Endothelial cell of umbilical vein (primary cell): ENCODE measurements at regions of chr10 and their contacts with region 1.

Region 1: DNA sequence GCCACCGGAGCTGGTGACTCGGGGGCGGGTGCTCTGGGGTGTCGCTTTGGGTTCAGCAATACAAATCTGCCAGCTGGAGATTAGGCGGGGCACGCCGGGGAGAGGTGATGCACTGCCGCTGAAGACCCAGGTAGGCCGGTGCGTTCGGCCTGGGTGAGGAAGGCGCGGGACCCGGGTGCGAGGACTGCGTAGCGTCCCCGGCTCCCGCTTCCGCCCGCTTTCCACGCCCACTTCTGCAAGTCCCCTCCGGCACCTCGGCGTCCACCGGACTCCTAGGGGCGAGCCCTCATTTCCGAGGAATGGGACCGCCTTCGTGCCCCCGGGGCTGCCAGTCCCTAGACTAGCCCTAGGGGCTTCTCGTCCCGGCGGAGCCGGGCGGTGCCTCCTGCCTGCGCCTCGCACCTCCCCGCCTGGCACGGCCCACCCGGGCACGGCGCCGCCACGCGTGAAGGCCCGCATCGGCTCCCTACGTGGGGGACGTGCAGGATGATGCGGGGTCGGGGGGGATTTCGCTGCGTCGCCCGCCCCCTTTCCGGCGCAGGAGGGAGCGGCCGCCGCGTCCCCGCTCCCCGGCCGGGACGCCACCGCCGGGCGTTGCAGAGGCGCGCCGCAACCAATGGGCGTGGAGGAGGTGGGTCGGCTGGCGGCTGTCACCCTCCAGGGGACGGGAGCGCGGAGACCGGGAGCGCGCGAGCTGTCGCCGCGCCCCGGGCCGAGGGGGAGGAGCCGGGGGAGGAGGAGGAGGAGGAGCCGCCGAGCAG is 40.0 kb downstream of the HK1 start:
- DNase-seq: peak; percentile 86
- H3K4me3 ChIP-seq: peak overlapping the region; percentile 47 to 92 (median 70)
- H3K27ac ChIP-seq: peak overlapping the region; percentile 84
- H3K4me1 ChIP-seq: peaks cover 48% of the 10 kb centered on the region
- H3K27me3 ChIP-seq: no peaks in the 10 kb centered on the region
- CTCF ChIP-seq: no peak
- POLR2A ChIP-seq: no peak

Region 2: GRCh38 chr10:69107699-69108098 is 210.6 kb before region 1 on chr10:
- CTCF ChIA-PET with region 1: no interaction called
- POLR2A ChIA-PET with region 1: no interaction called
- dilution Hi-C with region 1: no loop called
- intact Hi-C with region 1: no loop called
- DNase-seq: no peak
- H3K4me3 ChIP-seq: no peak overlapping the region
- H3K27ac ChIP-seq: no peak overlapping the region
- H3K4me1 ChIP-seq: peaks cover 3% of the 10 kb centered on the region
- H3K27me3 ChIP-seq: no peaks in the 10 kb centered on the region
- CTCF ChIP-seq: no peak
- POLR2A ChIP-seq: no peak

Region 3: GRCh38 chr10:69202332-69202731 is 116.0 kb before region 1 on chr10:
- CTCF ChIA-PET with region 1: no interaction called
- POLR2A ChIA-PET with region 1: no interaction called
- dilution Hi-C with region 1: no loop called
- intact Hi-C with region 1: no loop called
- DNase-seq: no peak
- H3K4me3 ChIP-seq: no peak overlapping the region
- H3K27ac ChIP-seq: no peak overlapping the region
- H3K4me1 ChIP-seq: no peaks in the 10 kb centered on the region
- H3K27me3 ChIP-seq: no peaks in the 10 kb centered on the region
- CTCF ChIP-seq: no peak
- POLR2A ChIP-seq: no peak

Region 4: GRCh38 chr10:69237528-69238159 is 80.6 kb before region 1 on chr10:
- CTCF ChIA-PET with region 1: interaction called, 5 read pairs
- POLR2A ChIA-PET with region 1: no interaction called
- dilution Hi-C with region 1: no loop called
- intact Hi-C with region 1: loop called (anchors 1 kb)
- DNase-seq: peak; percentile 81
- H3K4me3 ChIP-seq: no peak overlapping the region
- H3K27ac ChIP-seq: no peak overlapping the region
- H3K4me1 ChIP-seq: peaks cover 16% of the 10 kb centered on the region
- H3K27me3 ChIP-seq: no peaks in the 10 kb centered on the region
- CTCF ChIP-seq: peak; percentile 81 to 90
- POLR2A ChIP-seq: no peak

Region 5: GRCh38 chr10:69269761-69270160 is 48.5 kb before region 1 on chr10:
- CTCF ChIA-PET with region 1: no interaction called
- POLR2A ChIA-PET with region 1: no interaction called
- dilution Hi-C with region 1: no loop called
- intact Hi-C with region 1: loop called (anchors 2 kb)
- DNase-seq: no peak
- H3K4me3 ChIP-seq: no peak overlapping the region
- H3K27ac ChIP-seq: no peak overlapping the region
- H3K4me1 ChIP-seq: peaks cover 24% of the 10 kb centered on the region
- H3K27me3 ChIP-seq: peaks cover 3 to 8% of the 10 kb centered on the region in 2 experiments
- CTCF ChIP-seq: no peak
- POLR2A ChIP-seq: no peak

Region 6: DNA sequence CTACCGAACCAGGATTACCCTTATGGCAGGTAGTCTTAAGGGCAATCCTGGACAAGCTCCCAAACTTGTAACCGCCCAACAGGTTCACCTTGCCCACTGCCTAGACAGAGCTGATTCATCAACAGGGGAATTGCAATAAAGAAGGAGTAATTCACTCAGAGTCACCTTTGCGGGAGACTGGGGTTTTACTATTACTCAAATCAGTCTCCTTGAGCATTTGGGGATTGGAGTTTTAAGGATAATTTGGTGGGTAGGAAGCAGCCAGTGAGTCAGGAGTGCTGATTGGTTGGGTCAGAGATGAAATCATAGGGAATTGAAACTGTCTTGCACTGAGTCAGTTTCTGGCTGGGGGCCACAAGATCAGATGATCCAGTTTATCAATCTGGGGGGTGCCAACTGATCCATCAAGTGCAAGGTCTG is 14.6 kb before region 1 on chr10:
- CTCF ChIA-PET with region 1: no interaction called
- POLR2A ChIA-PET with region 1: no interaction called
- dilution Hi-C with region 1: no loop called
- intact Hi-C with region 1: no loop called
- DNase-seq: no peak
- H3K4me3 ChIP-seq: no peak overlapping the region
- H3K27ac ChIP-seq: no peak overlapping the region
- H3K4me1 ChIP-seq: no peaks in the 10 kb centered on the region
- H3K27me3 ChIP-seq: no peaks in the 10 kb centered on the region
- CTCF ChIP-seq: no peak
- POLR2A ChIP-seq: no peak

Region 7: GRCh38 chr10:69348816-69349541 is 30.7 kb after region 1 on chr10:
- CTCF ChIA-PET with region 1: interaction called, 4 read pairs
- POLR2A ChIA-PET with region 1: interaction called, 3 read pairs
- dilution Hi-C with region 1: no loop called
- intact Hi-C with region 1: loop called (anchors 1 kb)
- DNase-seq: peak; percentile 74
- H3K4me3 ChIP-seq: no peak overlapping the region
- H3K27ac ChIP-seq: peak overlapping the region; percentile 77
- H3K4me1 ChIP-seq: peaks cover 52% of the 10 kb centered on the region
- H3K27me3 ChIP-seq: no peaks in the 10 kb centered on the region
- CTCF ChIP-seq: no peak
- POLR2A ChIP-seq: no peak

Region 8: GRCh38 chr10:69360485-69361324 is 42.4 kb after region 1 on chr10:
- CTCF ChIA-PET with region 1: interaction called, 3 read pairs
- POLR2A ChIA-PET with region 1: no interaction called
- dilution Hi-C with region 1: loop called (anchors 10 kb)
- intact Hi-C with region 1: loop called (anchors 1 kb)
- DNase-seq: peak; percentile 40
- H3K4me3 ChIP-seq: no peak overlapping the region
- H3K27ac ChIP-seq: peak overlapping the region; percentile 35
- H3K4me1 ChIP-seq: peaks cover 28% of the 10 kb centered on the region
- H3K27me3 ChIP-seq: no peaks in the 10 kb centered on the region
- CTCF ChIP-seq: no peak
- POLR2A ChIP-seq: no peak

Region 9: GRCh38 chr10:69506834-69507721 is 188.8 kb after region 1 on chr10:
- CTCF ChIA-PET with region 1: no interaction called
- POLR2A ChIA-PET with region 1: no interaction called
- dilution Hi-C with region 1: no loop called
- intact Hi-C with region 1: no loop called
- DNase-seq: peak; percentile 11
- H3K4me3 ChIP-seq: no peak overlapping the region
- H3K27ac ChIP-seq: no peak overlapping the region
- H3K4me1 ChIP-seq: peaks cover 7% of the 10 kb centered on the region
- H3K27me3 ChIP-seq: no peaks in the 10 kb centered on the region
- CTCF ChIP-seq: no peak
- POLR2A ChIP-seq: no peak